ENCODE measurements at regions of chrX and their contacts with region 1.

Region 1: DNA sequence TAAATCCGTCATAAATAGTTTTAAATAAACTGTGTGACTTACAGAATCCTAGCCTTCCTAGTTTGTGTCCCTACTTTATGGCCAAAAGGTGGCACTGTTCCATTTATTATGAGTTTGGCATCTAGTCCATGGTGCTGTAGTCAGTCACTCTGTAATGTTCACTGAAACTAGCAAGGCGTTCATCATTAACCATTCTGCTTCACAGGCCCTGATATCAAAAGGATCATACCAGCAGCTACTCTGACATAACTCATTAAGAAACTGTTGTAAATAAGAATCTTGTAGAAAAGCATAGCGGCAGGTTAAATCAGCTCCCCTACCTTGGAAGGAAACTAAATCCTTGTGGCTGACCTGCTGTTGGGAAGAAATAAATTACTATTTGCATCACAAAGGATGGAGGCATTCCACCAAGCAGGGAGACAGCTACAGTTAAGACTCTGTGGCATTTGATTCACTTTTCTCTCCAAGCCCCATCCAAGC is 919.6 kb upstream of the DIAPH2 start:
- DNase-seq: peak in 1 of 2 donors; percentile 2
- ATAC-seq: peak in 1 of 8 donors; percentile 29
- H3K4me3 ChIP-seq: no peak overlapping the region
- H3K27ac ChIP-seq: no peak overlapping the region
- H3K4me1 ChIP-seq: no peaks in the 10 kb centered on the region
- H3K27me3 ChIP-seq: peaks cover 0 to 11% (median 0%) of the 10 kb centered on the region in 7 donors
- CTCF ChIP-seq: peak in 7 of 9 donors; percentile 38 to 57 (median 46)

Region 2: GRCh38 chrX:95063554-95063953 is 701.5 kb before region 1 on chrX:
- intact Hi-C with region 1: no loop called
- DNase-seq: no peak
- ATAC-seq: no peak
- H3K4me3 ChIP-seq: no peak overlapping the region
- H3K27ac ChIP-seq: no peak overlapping the region
- H3K4me1 ChIP-seq: no peaks in the 10 kb centered on the region
- H3K27me3 ChIP-seq: peaks cover 0 to 14% (median 0%) of the 10 kb centered on the region in 7 donors
- CTCF ChIP-seq: no peak

Region 3: GRCh38 chrX:95585321-95585720 is 179.7 kb before region 1 on chrX:
- intact Hi-C with region 1: no loop called
- DNase-seq: no peak
- ATAC-seq: no peak
- H3K4me3 ChIP-seq: no peak overlapping the region
- H3K27ac ChIP-seq: no peak overlapping the region
- H3K4me1 ChIP-seq: no peaks in the 10 kb centered on the region
- H3K27me3 ChIP-seq: no peaks in the 10 kb centered on the region
- CTCF ChIP-seq: no peak

Region 4: GRCh38 chrX:96182366-96182765 is 417.4 kb after region 1 on chrX:
- intact Hi-C with region 1: loop called in 1 of 10 experiments (anchors 10 kb)
- DNase-seq: no peak
- ATAC-seq: no peak
- H3K4me3 ChIP-seq: no peak overlapping the region
- H3K27ac ChIP-seq: no peak overlapping the region
- H3K4me1 ChIP-seq: no peaks in the 10 kb centered on the region
- H3K27me3 ChIP-seq: peaks cover 0 to 4% (median 0%) of the 10 kb centered on the region in 7 donors
- CTCF ChIP-seq: peak in 7 of 9 donors; percentile 28 to 45 (median 35)

Measured in heart right ventricle (tissue), 16 donors.